ENCODE measurements at regions of chr7 and their contacts with region 1.

Region 1: DNA sequence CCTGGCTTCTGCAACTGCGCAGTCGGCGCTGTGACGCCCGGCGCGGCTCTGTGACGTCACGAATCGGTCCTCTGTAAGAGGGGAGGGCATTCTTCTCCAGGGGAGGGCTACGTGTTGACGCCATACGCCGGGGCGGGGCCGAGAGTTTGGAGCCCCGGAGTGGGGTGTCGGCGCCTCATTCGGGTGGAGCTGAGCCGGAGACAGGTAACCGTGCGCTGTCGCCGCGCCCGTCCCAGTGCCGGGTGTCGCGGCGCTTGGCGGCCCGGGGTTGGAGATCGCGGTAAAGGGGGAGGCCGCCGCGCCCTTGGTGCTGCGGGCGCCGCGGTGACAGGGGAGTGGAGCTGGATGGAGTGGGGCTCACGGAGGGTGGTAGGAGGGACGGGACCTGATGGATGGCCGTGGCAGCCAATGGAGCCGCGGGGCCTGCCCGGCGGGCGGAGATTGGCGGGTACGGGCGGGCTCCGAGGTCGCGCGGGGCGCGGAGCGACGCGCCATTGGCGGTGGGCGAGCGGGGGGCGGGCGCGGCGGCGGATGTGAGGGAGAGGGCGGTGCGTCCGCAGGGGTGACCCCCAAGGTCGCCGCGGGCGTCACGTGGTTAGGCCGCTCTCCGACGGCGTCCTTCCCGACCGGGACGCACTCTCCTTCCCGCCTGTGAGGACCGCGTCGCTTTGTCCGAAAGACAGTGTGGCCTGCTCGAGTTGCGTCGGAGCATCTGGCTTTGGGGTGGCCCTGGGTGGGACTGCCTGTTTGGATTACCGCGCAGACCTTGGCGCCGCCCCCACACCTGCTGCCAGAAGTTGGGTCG is at the start of gene OGDH:
- DNase-seq: peak; percentile 98
- H3K4me3 Mint-ChIP-seq: peak within 1 kb of the TSS; percentile 98
- H3K27ac Mint-ChIP-seq: peak within 1 kb of the TSS; percentile 99
- H3K4me1 Mint-ChIP-seq: peaks cover 39% of the 10 kb centered on the region
- H3K27me3 Mint-ChIP-seq: peaks cover 10% of the 10 kb centered on the region
- total RNA-seq, gene OGDH: 101 and 105 TPM in 2 replicates

Region 2: GRCh38 chr7:44123190-44124003 is 483.3 kb before region 1 on chr7 and contains the start of gene POLD2:
- intact Hi-C with region 1: loop called (anchors 1 kb)
- DNase-seq: peak; percentile 98
- H3K4me3 Mint-ChIP-seq: peak within 1 kb of the TSS; percentile 96
- H3K27ac Mint-ChIP-seq: peak within 1 kb of the TSS; percentile 90
- H3K4me1 Mint-ChIP-seq: peaks cover 31% of the 10 kb centered on the region
- H3K27me3 Mint-ChIP-seq: peaks cover 7% of the 10 kb centered on the region
- total RNA-seq, gene POLD2: 234 and 250 TPM in 2 replicates

Region 3: GRCh38 chr7:44581879-44582603 is 24.6 kb before region 1 on chr7 and contains the start of gene TMED4:
- intact Hi-C with region 1: loop called (anchors 1 kb)
- DNase-seq: peak; percentile 100
- H3K4me3 Mint-ChIP-seq: peak within 1 kb of the TSS; percentile 93
- H3K27ac Mint-ChIP-seq: peak within 1 kb of the TSS; percentile 93
- H3K4me1 Mint-ChIP-seq: peaks cover 33% of the 10 kb centered on the region
- H3K27me3 Mint-ChIP-seq: no peaks in the 10 kb centered on the region
- total RNA-seq, gene TMED4: 74.9 and 79.6 TPM in 2 replicates

Region 4: GRCh38 chr7:44633254-44634186 is 26.9 kb after region 1 on chr7:
- intact Hi-C with region 1: loop called (anchors 1 kb)
- DNase-seq: peak; percentile 45
- H3K4me3 Mint-ChIP-seq: peak overlapping the region; percentile 64
- H3K27ac Mint-ChIP-seq: peak overlapping the region; percentile 87
- H3K4me1 Mint-ChIP-seq: peaks cover 84% of the 10 kb centered on the region
- H3K27me3 Mint-ChIP-seq: no peaks in the 10 kb centered on the region

Region 5: DNA sequence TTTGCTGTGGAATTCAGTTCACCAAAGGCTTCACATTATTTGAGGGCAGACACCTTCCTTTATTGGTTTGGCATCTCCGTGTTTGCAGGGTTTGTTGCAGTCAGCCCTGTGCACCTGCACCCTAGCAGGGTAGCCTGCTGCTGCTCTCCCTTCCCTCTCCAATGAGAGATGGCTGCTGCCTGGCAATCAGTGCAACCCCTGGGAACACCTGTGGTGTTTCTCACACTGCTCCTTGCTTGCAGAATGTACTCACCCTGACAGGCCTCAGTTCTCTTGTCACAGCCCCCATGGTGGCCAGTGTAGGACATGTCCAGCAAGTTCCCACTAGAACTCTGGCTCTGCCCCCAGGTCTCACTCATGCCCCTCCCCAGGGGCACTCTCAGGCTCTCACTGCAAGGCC is 177.7 kb after region 1 on chr7:
- intact Hi-C with region 1: no loop called
- DNase-seq: no peak
- H3K4me3 Mint-ChIP-seq: no peak overlapping the region
- H3K27ac Mint-ChIP-seq: no peak overlapping the region
- H3K4me1 Mint-ChIP-seq: no peaks in the 10 kb centered on the region
- H3K27me3 Mint-ChIP-seq: peaks cover 2% of the 10 kb centered on the region

Region 6: DNA sequence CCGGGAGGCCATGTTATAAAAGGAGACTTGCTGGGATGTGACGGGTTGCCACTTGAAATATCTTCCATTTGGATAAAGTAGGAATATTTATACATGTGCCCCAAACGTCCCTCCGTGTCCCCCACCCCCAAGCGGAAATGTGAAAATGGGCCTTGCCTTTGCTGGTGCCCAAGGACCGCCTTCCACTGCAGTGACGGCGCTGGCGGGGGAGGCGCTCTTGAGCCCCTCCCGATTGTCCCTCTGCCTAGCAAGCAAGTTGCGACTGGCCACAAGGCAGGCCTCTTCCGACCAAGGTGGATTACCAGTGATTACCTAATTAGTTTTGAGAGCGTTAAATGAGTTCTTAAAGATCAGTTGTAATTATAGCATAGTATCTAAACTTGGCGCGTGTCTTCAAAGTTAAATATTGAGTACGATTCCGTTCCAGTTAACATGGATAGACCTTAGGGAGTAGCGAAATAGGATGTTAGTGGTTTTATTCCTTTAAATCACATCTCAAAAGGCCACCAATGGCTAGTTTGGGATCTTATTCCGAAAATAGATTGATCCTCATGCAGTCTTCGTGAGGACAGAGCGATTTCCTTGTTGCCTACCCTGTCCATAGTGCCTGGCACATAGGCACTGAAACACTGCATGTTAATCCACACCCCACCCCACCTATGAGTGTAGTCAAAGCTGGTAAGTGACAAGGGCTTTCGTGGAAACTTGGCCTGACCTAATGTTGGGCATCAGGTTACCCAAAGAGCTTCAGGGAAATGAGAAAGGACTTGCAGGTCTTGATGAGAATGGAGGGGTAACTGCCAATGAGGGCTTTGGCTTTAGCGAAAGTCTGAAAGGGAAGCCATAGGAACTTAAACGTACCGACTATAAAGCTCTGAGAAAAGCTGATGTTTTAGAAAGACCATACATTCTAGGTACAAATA is 190.9 kb after region 1 on chr7:
- intact Hi-C with region 1: loop called (anchors 1 kb)
- DNase-seq: peak; percentile 81
- H3K4me3 Mint-ChIP-seq: peak overlapping the region; percentile 94
- H3K27ac Mint-ChIP-seq: peak overlapping the region; percentile 94
- H3K4me1 Mint-ChIP-seq: peaks cover 34% of the 10 kb centered on the region
- H3K27me3 Mint-ChIP-seq: no peaks in the 10 kb centered on the region

Region 7: DNA sequence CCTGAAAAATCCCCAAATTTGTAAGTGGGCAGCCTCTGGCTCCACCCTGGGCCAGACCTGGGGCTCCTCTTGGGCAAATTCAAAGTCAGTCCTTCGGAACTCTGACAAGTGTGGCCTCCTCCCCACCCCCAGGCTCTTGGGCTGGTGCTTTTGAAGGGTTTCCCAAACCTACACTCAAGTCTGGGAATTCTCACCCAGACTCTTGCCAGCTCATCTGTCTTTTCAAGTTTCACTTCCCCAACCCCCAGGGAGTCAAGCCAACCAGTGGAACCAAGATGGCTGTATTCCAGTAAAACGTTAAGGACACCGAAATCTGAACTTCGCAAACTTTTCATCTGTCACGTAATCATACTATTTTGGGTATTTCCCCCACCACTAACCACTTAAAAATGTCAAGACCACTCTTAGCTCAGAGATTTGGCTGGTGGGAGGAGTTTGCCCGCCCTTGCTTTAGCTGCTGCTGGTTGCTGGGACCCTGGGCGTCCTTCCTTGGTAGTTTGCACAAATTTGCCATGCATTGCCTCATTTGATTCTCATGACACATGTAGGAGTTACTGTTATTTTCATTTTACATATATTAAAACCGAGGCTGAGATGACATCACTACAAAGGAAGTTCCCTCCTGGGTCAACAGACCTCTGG is 373.9 kb after region 1 on chr7:
- intact Hi-C with region 1: loop called (anchors 1 kb)
- DNase-seq: peak; percentile 56
- H3K4me3 Mint-ChIP-seq: peak overlapping the region; percentile 98
- H3K27ac Mint-ChIP-seq: peak overlapping the region; percentile 98
- H3K4me1 Mint-ChIP-seq: peaks cover 78% of the 10 kb centered on the region
- H3K27me3 Mint-ChIP-seq: no peaks in the 10 kb centered on the region

Measured in activated T-helper 1 cell treated with anti-CD3 and anti-CD28 coated beads, Interleukin-12 subunit alpha, Interleukin-12 subunit beta, Interleukin-2, Interleukin-4 antibody, amounts not matched to agents 30 ng/mL and 10 ng/mL and 1 ng/mL, durations not matched to agents 14 hours and 24 hours and 36 hours (primary cell).